Cardiac septum (tissue), 1 donor: ENCODE measurements at regions of chr1 and their contacts with region 1.

Region 1: DNA sequence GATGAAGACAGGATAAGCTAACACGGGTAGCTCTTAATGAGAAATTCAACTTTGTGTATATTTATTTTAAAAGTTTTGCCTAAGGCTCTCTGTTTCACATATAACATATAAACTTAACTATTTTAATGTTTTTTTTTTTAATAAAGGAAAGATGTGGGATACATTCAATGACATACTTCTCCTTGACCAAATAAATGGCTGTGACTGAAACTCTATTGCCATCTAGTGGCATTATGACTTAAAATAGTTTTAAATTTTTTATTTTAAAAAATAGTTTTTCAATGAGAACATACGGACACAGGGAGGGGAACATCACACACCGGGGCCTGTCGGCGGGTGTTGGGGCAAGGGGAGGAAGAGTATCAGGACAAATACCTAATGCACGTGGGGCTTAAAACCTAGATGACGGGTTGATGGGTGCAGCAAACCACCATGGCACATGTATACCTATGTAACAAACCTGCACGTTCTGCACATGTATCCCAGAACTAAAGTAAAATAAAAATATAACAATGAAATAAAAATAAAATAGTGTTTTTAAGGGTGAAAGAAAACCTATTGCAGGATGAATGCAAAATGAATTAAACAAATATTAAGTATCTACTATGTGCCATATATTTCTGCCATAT is 83.4 kb downstream of the LYST start:
- DNase-seq: no peak

Region 2: GRCh38 chr1:235486321-235486720 is 296.9 kb before region 1 on chr1:
- intact Hi-C with region 1: no loop called
- DNase-seq: no peak

Region 3: GRCh38 chr1:235513495-235514366 is 269.5 kb before region 1 on chr1:
- intact Hi-C with region 1: loop called (anchors 5 kb)
- DNase-seq: no peak

Region 4: DNA sequence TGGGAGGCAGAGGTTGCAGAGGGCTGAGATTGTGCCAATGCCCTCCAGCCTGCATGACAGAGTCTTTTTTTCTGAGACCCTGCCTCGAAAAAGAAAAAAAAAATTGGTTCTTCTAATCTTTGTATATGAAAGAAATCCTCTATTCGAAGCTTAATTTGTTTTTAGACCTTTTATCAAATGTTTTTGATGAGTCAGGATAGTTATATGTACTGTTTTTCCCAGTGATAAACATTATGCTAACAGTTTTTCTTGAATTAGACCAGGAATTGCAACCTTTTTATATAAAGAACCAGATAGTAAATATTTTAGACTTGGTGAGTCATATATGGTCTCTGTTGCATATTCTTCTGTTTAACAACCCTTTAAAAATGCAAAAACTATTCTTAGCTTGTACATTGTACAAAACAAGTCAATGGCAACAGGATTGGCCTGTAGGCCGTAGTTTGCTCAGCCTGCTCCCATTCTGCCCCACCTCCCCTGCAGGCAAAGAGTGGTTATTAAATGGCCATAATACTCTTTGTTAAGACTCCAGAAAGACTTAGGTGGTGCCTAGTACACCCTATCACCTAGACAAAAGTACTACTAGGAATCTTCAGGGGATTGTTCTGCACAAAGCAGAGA is 38.2 kb after region 1 on chr1:
- intact Hi-C with region 1: no loop called
- DNase-seq: no peak

Region 5: DNA sequence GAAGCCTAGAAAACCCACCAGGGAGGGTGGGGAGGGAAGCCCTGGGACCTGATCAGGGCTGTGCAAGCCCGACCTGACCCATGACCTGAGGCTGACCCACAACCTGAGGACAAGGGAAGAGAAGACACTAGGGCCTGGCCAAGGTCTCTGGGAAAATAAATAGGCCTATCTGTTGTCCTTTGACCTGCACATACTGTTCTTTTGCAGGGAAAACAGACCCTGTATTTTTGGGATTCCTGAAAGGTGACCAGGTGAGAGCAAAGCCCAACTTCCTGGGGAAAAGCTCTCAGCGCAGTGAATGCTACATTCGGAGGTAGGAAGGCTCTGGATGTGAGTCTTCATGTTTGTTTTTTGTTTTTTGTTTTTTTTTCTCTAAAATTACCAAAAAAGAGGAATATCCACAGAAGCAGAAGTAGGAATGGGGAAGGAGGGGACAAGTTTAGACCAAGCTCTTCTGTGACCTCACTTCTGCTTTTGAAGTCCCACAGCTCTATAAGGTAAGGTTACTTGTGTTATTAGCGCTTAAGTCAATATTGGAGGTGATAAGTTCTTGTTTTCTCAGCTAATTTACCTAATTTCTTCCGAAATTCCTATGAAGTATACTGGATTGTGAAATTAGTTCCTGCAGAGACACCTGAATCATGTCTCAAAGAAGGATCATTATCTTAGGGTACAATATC is 109.6 kb after region 1 on chr1:
- intact Hi-C with region 1: no loop called
- DNase-seq: no peak

Region 6: GRCh38 chr1:235971571-235972310 is 188.5 kb after region 1 on chr1:
- intact Hi-C with region 1: loop called (anchors 10 kb)
- DNase-seq: peak; percentile 96